Pancreas (tissue), 10 donors: ENCODE measurements at regions of chr1 and their contacts with region 1.

Region 1: DNA sequence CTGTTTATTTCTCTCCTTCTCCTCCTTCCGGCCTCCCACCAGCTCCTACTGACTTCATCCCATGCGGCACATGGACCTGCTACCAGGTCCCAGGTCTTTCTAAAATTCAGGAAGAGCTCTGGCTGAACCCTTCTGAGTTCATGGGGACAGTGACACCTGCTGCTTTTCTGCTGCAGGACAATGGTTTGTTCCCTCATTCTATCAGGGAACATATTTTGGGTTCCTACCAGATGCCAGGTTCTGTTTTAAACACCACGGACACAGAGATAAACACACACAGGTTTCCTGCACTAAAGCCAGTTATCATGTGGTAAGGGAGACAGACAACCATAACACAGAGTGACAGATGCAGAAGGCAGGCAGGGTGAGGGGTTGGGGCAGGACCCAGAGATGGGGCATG is 114.0 kb upstream of the RAB4A start:
- DNase-seq: peak in 2 of 6 donors; percentile 38 to 60
- ATAC-seq: peak; percentile 61 to 89 (median 78)
- H3K4me3 ChIP-seq: no peak overlapping the region
- H3K27ac ChIP-seq: no peak overlapping the region
- H3K4me1 ChIP-seq: no peaks in the 10 kb centered on the region
- H3K27me3 ChIP-seq: no peaks in the 10 kb centered on the region
- CTCF ChIP-seq: peak in 3 of 4 donors; percentile 20 to 38 (median 23)

Region 2: DNA sequence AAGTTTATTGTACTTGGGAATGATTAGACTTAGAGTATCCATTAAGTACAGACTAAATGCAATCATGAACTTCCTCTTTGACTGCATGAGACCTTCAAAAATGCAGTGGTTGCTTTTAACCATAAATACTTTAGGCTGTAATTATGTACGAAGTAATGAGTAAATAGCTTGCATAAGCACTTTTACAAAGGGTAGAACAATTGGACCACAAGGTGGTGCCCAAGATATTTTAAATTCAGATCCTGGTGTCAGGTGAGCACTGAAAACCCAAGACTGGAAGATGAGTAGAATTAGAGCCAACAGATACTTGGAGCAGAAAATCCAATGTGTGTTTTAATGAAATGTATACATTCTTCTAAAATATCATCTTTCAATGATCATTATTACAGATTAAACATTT is 464.9 kb before region 1 on chr1:
- intact Hi-C with region 1: loop called in 1 of 3 experiments (anchors 10 kb)
- DNase-seq: peak in 3 of 6 donors; percentile 32 to 47 (median 32)
- ATAC-seq: peak; percentile 61 to 93 (median 86)
- H3K4me3 ChIP-seq: no peak overlapping the region
- H3K27ac ChIP-seq: no peak overlapping the region
- H3K4me1 ChIP-seq: peaks cover 0 to 5% (median 0%) of the 10 kb centered on the region in 3 donors
- H3K27me3 ChIP-seq: no peaks in the 10 kb centered on the region
- CTCF ChIP-seq: peak in 2 of 4 donors; percentile 26 to 39

Region 3: DNA sequence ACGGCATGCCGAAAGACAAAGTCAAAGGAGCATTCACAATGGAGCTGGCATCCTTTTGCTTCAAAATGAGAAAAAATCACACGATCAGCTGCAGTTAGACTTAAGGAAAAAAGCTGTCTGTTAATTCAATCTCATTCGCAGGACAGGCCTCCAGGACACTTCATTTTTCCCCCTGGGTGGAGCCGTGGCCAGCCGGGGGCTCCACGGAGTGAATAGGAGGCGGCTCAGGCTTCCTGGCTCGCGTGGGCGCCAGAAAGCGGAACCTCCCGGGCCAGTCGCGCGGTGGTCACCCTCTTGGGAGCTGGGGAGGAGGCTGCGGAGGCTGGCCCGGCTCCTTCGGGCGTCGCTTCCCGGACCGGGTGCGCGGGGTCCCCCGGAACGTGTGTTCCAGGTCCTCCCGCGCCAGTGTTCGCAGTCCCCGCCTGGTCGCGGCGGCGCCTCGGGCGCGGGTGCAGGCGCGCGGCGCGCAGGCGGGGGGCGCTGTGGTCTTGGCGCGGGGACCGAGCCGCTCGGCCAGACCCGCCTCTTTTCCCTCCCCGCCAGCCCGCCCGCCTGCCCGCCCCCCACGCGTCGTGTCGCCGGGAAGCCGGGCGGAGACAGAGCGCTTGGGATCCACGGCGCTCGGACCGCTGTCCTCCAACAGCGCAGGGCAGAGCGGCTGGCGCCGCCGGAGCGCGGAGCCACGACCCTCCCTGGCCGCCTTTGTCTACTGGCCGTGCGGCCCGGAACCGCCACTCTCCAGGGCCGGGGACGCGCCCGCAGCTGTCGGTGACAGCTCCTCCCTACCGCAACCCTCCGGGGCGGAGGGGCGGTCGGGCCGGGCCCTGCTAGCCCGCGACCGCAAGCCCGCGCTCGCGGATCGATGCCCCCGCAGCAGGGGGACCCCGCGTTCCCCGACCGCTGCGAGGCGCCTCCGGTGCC is 421.7 kb before region 1 on chr1 and contains the start of gene RHOU:
- intact Hi-C with region 1: loop called in 2 of 3 experiments (anchors 10 kb)
- DNase-seq: peak; percentile 74 to 94 (median 88)
- ATAC-seq: peak; percentile 89 to 95 (median 92)
- H3K4me3 ChIP-seq: peak within 1 kb of the TSS; percentile 87 to 97 (median 90)
- H3K27ac ChIP-seq: peak within 1 kb of the TSS; percentile 88 to 96 (median 94)
- H3K4me1 ChIP-seq: peaks cover 2 to 16% (median 15%) of the 10 kb centered on the region in 3 donors
- H3K27me3 ChIP-seq: no peaks in the 10 kb centered on the region
- CTCF ChIP-seq: peak; percentile 84 to 92 (median 87)
- total RNA-seq, gene RHOU: 5.4 to 14.1 (median 9.8) TPM